ENCODE measurements at regions of chr3 and their contacts with region 1.

Region 1: DNA sequence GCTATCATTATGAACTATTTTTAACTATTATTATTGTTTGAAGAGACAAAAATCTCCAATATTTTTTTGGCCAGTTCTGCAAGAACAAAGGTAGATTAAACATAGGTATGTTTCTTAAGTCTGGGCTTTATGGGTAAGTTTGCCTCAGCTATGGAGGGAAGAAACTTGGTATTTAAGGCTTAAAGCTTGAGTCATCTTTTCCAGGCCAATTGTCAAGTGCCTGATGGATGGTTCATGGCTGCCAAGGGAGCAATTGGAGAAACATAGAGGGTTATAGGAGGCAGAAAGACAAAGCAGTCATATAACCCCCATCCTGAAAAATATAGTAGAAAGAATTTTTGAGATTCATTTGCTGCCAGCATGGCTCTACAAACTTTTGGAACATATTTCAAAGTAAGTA is 7.2 kb upstream of the STAC start:
- DNase-seq: peak in 1 of 2 donors; percentile 83
- H3K4me3 ChIP-seq: no peak overlapping the region
- H3K27ac ChIP-seq: peak overlapping the region; percentile 68 to 71
- H3K4me1 ChIP-seq: peaks cover 0 to 22% of the 10 kb centered on the region in 2 donors
- H3K27me3 ChIP-seq: no peaks in the 10 kb centered on the region
- CTCF ChIP-seq: no peak

Region 2: GRCh38 chr3:36434687-36435426 is 61.8 kb after region 1 on chr3:
- intact Hi-C with region 1: loop called (anchors 10 kb)
- DNase-seq: no peak
- H3K4me3 ChIP-seq: no peak overlapping the region
- H3K27ac ChIP-seq: peak overlapping the region; percentile 53 to 77
- H3K4me1 ChIP-seq: peaks cover 0 to 38% of the 10 kb centered on the region in 2 donors
- H3K27me3 ChIP-seq: no peaks in the 10 kb centered on the region
- CTCF ChIP-seq: no peak

Region 3: DNA sequence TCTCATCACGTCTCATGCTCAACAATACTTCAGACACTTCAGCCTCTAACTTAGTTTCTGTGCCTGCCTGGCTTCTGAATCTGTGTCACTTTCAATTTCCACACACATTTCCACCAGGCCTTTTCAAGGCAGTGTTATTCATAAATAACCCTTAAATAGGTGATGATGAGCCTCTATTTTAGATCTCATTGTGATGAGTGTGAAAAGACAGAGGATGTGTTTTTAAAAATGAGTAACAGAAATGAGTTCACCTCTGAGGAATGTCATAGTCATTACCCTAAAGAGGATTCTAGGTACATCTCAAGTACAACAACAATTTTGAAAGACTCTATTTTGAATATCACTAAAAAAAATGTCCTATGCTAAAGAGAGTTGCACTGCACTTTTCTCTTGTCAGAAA is 71.8 kb after region 1 on chr3:
- intact Hi-C with region 1: no loop called
- DNase-seq: no peak
- H3K4me3 ChIP-seq: no peak overlapping the region
- H3K27ac ChIP-seq: peak overlapping the region; percentile 5 to 14
- H3K4me1 ChIP-seq: no peaks in the 10 kb centered on the region
- H3K27me3 ChIP-seq: no peaks in the 10 kb centered on the region
- CTCF ChIP-seq: no peak

Region 4: DNA sequence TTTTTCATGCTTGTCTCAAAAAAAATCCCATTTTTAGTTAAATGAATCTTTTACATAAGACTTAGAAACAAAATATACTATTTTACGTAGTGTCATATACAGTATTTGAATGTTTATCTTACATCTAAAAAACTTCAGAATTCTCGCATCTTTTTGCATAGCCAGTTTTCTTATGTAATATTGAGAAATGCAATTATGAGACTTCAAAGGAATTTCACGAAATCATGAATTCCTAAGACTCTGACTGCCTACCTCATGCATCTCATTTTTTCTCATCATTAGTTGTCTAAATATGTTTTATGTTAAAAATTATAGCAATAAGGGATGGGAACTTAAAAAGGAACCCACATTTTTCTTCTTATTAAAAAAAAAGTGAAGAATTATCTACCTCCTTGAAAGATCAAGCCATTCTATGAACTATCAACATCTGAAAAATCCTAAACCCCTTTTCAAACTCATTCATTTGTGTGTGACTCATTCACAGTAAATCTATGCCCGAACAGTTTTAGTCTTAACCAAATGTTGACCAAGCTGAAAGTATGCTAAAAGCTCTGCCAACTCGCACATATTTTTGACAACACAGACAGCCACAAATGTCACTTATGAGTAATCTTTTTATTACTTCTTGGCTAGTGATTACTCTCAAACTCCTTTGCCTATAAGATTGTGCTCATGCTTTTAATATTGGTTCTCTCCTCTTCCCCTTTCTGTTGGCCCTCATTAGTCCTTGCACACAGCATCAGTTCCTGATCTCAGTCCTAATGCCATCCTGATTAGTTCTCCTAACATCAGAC is 275.4 kb after region 1 on chr3:
- intact Hi-C with region 1: loop called (anchors 5 kb)
- DNase-seq: no peak
- H3K4me3 ChIP-seq: no peak overlapping the region
- H3K27ac ChIP-seq: peak overlapping the region; percentile 69 to 78
- H3K4me1 ChIP-seq: peaks cover 0 to 24% of the 10 kb centered on the region in 2 donors
- H3K27me3 ChIP-seq: no peaks in the 10 kb centered on the region
- CTCF ChIP-seq: no peak

Measured in ascending aorta (tissue), 2 donors.